Gastrocnemius medialis (tissue), 4 donors: ENCODE measurements at regions of chr12 and their contacts with region 1.

Region 1: DNA sequence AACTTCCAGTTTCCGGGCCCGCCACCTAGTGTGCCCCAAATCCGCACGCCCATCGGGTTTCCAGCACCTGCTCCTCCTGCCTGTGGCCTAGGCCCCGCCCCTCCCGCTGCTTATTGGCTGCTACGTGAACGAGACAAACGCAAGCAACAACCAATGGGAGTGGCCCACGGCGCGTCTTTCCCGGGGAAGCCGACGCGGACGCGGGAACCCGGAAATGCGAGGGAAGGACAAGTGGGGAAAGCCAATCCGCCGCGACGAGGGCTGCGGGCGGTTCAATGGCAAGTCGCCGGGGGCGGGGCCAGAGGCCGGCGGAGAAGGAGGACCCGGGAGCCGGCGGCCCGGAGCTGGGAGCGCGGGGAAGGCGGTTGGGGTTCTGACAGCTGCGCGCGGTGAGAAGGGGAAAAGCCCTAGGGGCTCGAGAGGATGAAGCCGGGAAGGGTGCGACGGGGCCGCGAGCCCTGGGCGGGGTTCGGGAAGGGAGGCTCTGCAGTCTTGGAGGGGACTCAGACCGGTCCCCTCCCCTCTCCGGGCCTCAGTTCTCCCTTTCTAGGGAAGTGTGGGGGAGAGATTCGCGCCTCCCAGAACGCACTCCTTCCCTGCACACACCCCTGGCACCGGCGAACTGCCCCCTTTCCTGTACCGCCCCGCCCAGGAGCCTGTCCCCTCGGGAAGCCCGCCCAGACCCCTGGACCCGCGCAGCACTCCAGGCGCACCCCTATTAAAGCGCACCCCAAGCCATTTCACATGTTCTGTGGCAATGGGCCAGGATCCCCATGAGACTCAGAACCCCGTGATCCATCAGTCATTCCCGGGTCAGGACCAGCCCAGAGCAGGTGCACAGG is at the start of gene FICD:
- DNase-seq: peak; percentile 99
- ATAC-seq: peak; percentile 96 to 97
- H3K4me3 ChIP-seq: peak within 1 kb of the TSS; percentile 82 to 97 (median 86)
- H3K27ac ChIP-seq: peak within 1 kb of the TSS; percentile 79 to 84 (median 82)
- H3K4me1 ChIP-seq: peaks cover 16 to 19% of the 10 kb centered on the region in 2 donors
- H3K27me3 ChIP-seq: no peaks in the 10 kb centered on the region
- CTCF ChIP-seq: no peak
- POLR2A ChIP-seq: peak; percentile 40 to 53
- total RNA-seq, gene FICD: 3.1 to 4.6 (median 3.6) TPM

Region 2: GRCh38 chr12:107685360-107686248 is 829.6 kb before region 1 on chr12 and contains the start of gene PWP1:
- in situ Hi-C with region 1: loop called in 1 of 4 experiments (anchors 25 kb)
- intact Hi-C with region 1: no loop called
- DNase-seq: peak; percentile 82 to 91
- ATAC-seq: peak; percentile 97 to 98
- H3K4me3 ChIP-seq: peak within 1 kb of the TSS; percentile 74 to 97 (median 88)
- H3K27ac ChIP-seq: peak within 1 kb of the TSS; percentile 66 to 87 (median 82)
- H3K4me1 ChIP-seq: peaks cover 18 to 19% of the 10 kb centered on the region in 2 donors
- H3K27me3 ChIP-seq: no peaks in the 10 kb centered on the region
- CTCF ChIP-seq: peak in 1 of 5 experiments; percentile 16
- POLR2A ChIP-seq: peak; percentile 16 to 37
- total RNA-seq, gene PWP1: 37.9 to 62.1 (median 48.0) TPM

Region 3: DNA sequence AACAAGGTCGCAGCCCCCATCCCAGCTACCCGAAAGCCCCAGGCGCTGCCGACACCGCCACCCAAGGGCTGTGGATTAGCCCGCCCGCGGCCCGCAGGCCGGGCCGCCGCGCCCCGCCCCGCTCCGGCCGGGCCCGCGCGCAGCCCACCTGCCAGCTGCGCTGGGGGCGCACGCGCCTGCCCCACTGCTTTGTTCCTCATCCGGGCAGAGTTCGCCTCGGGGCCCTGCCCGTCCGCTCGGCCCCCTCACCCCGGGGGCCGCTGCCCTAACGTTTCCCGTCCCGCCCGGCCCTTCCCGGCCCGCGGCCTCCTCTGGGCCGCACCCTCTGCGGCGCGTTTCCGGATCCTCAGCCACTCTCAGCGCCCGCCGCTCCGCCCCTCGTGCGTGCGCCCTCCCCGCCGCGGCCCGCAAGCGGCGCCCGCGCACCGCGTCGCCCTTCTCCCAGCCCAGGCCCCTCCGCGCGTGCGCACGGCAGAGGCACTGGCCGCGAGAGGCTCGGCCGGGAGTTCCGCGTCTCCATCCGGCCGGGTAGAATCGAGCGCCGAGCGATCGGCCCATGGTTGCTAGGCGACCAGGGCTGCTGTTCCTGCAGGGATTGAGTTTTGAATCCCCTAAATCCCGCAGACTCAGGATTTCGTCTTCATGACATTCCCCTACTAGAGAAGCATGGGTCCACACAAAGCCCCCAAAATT is 754.2 kb before region 1 on chr12 and contains the start of gene PRDM4:
- in situ Hi-C with region 1: no loop called
- intact Hi-C with region 1: loop called (anchors 5 kb)
- DNase-seq: peak; percentile 87 to 91
- ATAC-seq: peak; percentile 95
- H3K4me3 ChIP-seq: peak within 1 kb of the TSS; percentile 73 to 93 (median 82)
- H3K27ac ChIP-seq: peak within 1 kb of the TSS; percentile 61 to 75 (median 67)
- H3K4me1 ChIP-seq: peaks cover 26 to 30% of the 10 kb centered on the region in 2 donors
- H3K27me3 ChIP-seq: no peaks in the 10 kb centered on the region
- CTCF ChIP-seq: peak in 4 of 5 experiments; percentile 33 to 60 (median 44)
- POLR2A ChIP-seq: peak; percentile 86 to 89
- total RNA-seq, gene PRDM4: 13.8 to 21.0 (median 19.2) TPM

Region 4: GRCh38 chr12:107992870-107993451 is 522.2 kb before region 1 on chr12:
- in situ Hi-C with region 1: no loop called
- intact Hi-C with region 1: loop called (anchors 5 kb)
- DNase-seq: no peak
- ATAC-seq: no peak
- H3K4me3 ChIP-seq: no peak overlapping the region
- H3K27ac ChIP-seq: no peak overlapping the region
- H3K4me1 ChIP-seq: no peaks in the 10 kb centered on the region
- H3K27me3 ChIP-seq: no peaks in the 10 kb centered on the region
- CTCF ChIP-seq: no peak
- POLR2A ChIP-seq: no peak

Region 5: GRCh38 chr12:108691175-108691997 is 176.2 kb after region 1 on chr12:
- in situ Hi-C with region 1: no loop called
- intact Hi-C with region 1: no loop called
- DNase-seq: peak; percentile 98 to 100
- ATAC-seq: peak; percentile 68 to 72
- H3K4me3 ChIP-seq: peak overlapping the region; percentile 34 to 49 (median 45)
- H3K27ac ChIP-seq: peak overlapping the region; percentile 92 to 98 (median 96)
- H3K4me1 ChIP-seq: peaks cover 86 to 91% of the 10 kb centered on the region in 2 donors
- H3K27me3 ChIP-seq: no peaks in the 10 kb centered on the region
- CTCF ChIP-seq: peak; percentile 44 to 68 (median 56)
- POLR2A ChIP-seq: peak; percentile 60 to 70

Region 6: GRCh38 chr12:108856428-108857157 is 341.4 kb after region 1 on chr12:
- in situ Hi-C with region 1: no loop called
- intact Hi-C with region 1: loop called (anchors 5 kb)
- DNase-seq: peak; percentile 70 to 91
- ATAC-seq: peak; percentile 28 to 39
- H3K4me3 ChIP-seq: peak overlapping the region; percentile 64 to 97 (median 86)
- H3K27ac ChIP-seq: peak overlapping the region; percentile 90 to 98 (median 96)
- H3K4me1 ChIP-seq: peaks cover 52 to 61% of the 10 kb centered on the region in 2 donors
- H3K27me3 ChIP-seq: no peaks in the 10 kb centered on the region
- CTCF ChIP-seq: no peak
- POLR2A ChIP-seq: peak; percentile 48 to 58